ENCODE measurements at regions of chr20 and their contacts with region 1.

Region 1: DNA sequence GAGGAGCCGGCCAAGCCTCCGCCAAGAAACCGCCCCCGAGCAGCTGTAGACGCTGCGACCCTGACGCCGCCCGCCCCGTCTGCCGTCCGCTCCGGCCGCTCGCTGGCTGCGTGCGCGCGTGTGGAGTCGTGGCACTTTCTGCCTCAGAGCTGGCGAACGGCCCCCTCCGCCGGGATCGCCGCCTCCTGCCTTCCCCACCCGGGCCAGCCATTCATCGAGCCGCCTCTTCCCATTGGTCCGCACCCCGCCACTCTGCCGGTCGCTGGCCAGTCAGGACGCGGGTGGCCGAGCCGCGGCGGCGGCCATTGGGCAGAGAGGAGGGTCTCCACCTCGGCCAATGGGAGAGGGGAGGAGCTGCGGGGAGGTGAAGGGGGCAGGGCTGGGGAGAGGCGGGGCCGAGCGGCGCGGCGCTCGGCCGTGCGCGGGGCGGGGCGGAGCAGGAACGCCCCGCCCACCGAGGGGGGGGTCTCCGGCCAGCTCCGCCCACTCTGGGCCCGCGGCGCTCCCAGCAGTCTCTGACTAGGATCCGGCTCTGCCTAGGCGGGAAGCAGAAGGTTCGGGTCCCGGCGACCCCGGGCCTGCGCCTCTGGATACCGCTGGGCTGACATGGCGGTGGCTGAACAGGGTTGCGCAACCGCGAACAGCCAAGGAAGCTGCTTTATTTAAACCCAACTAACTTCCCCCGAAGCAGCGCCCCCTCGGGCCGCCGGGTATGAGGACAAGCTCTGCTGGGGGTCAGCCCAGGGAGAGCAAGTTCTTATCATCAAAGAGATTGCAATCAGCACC is at the start of gene RRBP1:
- DNase-seq: peak; percentile 98
- ATAC-seq: peak; percentile 90
- H3K4me3 ChIP-seq: peak within 1 kb of the TSS; percentile 77
- H3K27ac ChIP-seq: peak within 1 kb of the TSS; percentile 26; the same call in 1 of the 2 replicates
- H3K4me1 ChIP-seq: peaks cover 19% of the 10 kb centered on the region
- H3K27me3 ChIP-seq: peaks cover 41% of the 10 kb centered on the region
- CTCF ChIP-seq: peak; percentile 88
- total RNA-seq, gene RRBP1: 176 and 241 TPM in 2 replicates

Region 2: DNA sequence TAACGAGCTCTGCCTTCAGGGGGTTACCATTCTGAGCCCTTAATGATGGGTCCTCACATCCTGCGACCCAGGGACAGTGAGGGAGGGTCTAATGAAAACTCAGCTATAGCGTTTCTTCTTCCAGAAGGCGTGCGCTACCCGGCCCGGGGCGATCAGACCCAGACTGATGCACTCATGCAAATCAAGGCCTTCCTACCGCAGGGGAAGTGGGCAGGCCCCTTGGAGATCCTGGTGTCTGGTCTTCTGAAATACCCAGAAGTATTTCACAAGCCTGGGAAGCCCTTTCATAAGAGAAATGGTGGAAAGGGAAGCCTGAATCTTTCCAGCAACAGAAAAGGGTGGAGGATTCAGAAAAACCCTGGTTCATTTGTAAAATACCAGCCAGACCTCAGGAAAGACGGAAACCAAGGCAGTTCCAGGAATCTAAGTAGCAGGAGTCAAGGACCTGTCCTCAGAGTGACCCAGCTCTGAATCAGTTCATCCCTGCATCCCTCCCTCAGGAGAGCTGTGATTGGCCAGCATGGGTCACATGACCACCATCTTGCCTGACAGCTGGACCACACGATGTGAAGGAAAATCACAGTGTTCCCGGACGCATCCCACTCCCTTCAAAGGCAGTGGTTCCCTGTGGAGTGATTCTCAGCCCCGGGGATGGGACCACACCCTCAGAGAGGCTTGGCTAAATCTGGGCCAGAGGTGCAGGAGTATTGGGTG is 163.8 kb before region 1 on chr20:
- CTCF ChIA-PET with region 1: no interaction called
- POLR2A ChIA-PET with region 1: no interaction called
- intact Hi-C with region 1: no loop called
- DNase-seq: no peak
- ATAC-seq: no peak
- H3K4me3 ChIP-seq: no peak overlapping the region
- H3K27ac ChIP-seq: no peak overlapping the region
- H3K4me1 ChIP-seq: no peaks in the 10 kb centered on the region
- H3K27me3 ChIP-seq: no peaks in the 10 kb centered on the region
- CTCF ChIP-seq: no peak

Region 3: DNA sequence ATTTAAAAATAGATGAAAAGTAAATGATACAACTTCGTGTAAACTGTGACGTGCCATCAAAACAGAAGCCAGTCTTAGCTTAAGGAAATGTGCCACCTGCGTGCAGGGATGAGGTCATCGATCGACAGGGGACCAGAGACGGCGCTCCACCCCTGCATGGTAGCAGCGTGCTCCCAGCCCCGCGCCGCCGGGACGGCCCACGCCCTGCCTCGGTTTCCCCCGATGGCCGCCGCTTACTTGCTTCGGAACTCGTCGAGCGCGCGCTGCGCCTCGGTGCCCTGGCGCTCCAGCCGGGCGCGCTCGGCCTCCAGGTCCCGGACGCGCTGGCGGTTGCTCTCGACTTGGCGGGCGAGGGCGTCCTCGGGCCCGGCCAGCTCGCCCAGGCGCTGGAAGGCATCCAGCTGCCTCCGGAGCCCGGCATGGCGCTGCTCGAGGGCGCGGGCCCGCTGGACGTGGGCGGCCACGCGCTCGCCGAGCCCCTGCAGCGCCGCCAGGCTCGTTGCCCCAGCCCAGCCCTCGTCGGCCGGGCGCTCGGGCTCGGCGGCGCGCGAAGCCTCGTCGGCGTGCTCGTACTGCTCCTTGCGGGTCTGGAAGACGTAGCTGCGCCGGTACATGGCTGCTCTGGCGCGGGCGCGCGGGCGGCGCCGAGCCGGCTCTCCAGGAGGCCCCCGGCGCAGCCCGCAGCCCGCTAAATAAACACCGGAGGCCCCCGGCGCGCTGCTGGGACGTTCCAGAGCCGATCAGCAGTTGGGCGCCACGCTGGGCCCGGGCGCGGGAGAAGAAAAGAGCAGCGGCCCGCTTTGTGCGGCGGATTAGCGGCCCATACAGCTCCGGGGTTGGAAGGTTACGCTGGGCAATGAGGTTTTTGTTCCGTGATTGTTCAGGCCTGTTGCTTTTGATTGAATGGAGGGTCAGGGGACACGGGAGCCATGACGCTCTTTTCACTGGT is 151.3 kb before region 1 on chr20 and contains the start of gene BFSP1:
- CTCF ChIA-PET with region 1: no interaction called
- POLR2A ChIA-PET with region 1: interaction called, 12 read pairs
- intact Hi-C with region 1: no loop called
- DNase-seq: peak; percentile 69
- ATAC-seq: peak; percentile 73
- H3K4me3 ChIP-seq: peak within 1 kb of the TSS; percentile 87
- H3K27ac ChIP-seq: peak within 1 kb of the TSS; percentile 11; the same call in 1 of the 2 replicates
- H3K4me1 ChIP-seq: peaks cover 15% of the 10 kb centered on the region
- H3K27me3 ChIP-seq: no peaks in the 10 kb centered on the region
- CTCF ChIP-seq: no peak
- total RNA-seq, gene BFSP1: 2.2 and 2.7 TPM in 2 replicates

Region 4: GRCh38 chr20:17735206-17735804 is 53.0 kb after region 1 on chr20:
- CTCF ChIA-PET with region 1: interaction called, 3 read pairs
- POLR2A ChIA-PET with region 1: no interaction called
- intact Hi-C with region 1: loop called (anchors 1 kb)
- DNase-seq: peak; percentile 85
- ATAC-seq: peak; percentile 92
- H3K4me3 ChIP-seq: no peak overlapping the region
- H3K27ac ChIP-seq: peak overlapping the region; percentile 35
- H3K4me1 ChIP-seq: peaks cover 13% of the 10 kb centered on the region
- H3K27me3 ChIP-seq: no peaks in the 10 kb centered on the region
- CTCF ChIP-seq: no peak

Region 5: DNA sequence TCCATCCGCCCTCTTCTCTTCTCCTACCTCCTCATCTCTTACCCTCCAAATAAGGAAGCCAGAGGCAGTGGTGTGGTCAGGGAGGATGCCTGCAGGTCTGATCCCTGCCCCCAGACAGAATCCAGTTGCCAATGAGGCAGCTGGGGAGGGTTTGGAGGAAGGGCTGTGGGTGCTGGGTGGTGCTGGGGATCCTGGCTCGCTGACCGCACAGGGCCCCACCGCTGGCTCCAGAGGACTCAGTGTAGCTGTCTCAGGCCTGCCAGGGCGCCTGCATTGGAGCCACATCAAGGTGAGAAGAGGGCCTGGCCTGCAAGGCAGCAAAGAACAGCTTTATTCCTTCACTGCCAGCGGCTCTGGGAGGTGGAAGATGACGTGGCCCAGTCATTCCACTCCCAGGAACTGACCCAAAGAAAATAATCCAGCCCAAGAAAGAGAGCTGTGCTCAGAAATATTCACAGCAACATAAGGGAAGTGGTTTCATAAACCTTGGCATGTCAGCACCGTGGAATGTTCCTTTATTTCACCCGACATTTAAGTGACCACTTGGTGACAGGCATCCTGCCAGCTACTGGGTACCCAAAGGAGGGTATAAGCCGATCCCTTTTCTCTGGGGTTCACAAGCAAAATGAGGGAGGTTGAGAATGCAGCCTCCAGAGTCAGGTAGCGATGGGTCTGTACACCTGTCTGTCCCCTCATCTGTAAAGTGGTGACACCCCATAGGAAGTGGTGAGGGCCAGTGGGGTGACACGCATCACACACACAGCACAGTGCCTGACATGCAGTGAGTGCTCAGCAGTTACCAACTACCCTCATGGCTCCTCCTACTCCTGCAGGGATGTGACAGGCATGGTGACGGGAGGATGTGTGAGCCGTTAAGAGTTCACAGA is 161.2 kb after region 1 on chr20:
- CTCF ChIA-PET with region 1: no interaction called
- POLR2A ChIA-PET with region 1: interaction called, 7 read pairs
- intact Hi-C with region 1: loop called (anchors 1 kb)
- DNase-seq: peak; percentile 94
- ATAC-seq: peak; percentile 92
- H3K4me3 ChIP-seq: peak overlapping the region; percentile 32
- H3K27ac ChIP-seq: peak overlapping the region; percentile 86
- H3K4me1 ChIP-seq: peaks cover 38% of the 10 kb centered on the region
- H3K27me3 ChIP-seq: no peaks in the 10 kb centered on the region
- CTCF ChIP-seq: no peak

Region 6: GRCh38 chr20:17873410-17874270 is 191.3 kb after region 1 on chr20:
- CTCF ChIA-PET with region 1: interaction called, 5 read pairs
- POLR2A ChIA-PET with region 1: interaction called, 12 read pairs
- intact Hi-C with region 1: no loop called
- DNase-seq: peak; percentile 65
- ATAC-seq: peak; percentile 72
- H3K4me3 ChIP-seq: no peak overlapping the region
- H3K27ac ChIP-seq: no peak overlapping the region
- H3K4me1 ChIP-seq: peaks cover 17% of the 10 kb centered on the region
- H3K27me3 ChIP-seq: peaks cover 13% of the 10 kb centered on the region
- CTCF ChIP-seq: no peak